ENCODE measurements at regions of chr3 and their contacts with region 1.

Region 1: GRCh38 chr3:47824541-47825473 is 21.9 kb downstream of the DHX30 start:
- DNase-seq: peak; percentile 80
- ATAC-seq: peak; percentile 98
- H3K4me3 Mint-ChIP-seq: peak overlapping the region; percentile 92
- H3K27ac Mint-ChIP-seq: peak overlapping the region; percentile 95
- H3K4me1 Mint-ChIP-seq: peaks cover 28% of the 10 kb centered on the region
- H3K27me3 Mint-ChIP-seq: no peaks in the 10 kb centered on the region
- CTCF ChIP-seq: peak; percentile 82

Region 2: DNA sequence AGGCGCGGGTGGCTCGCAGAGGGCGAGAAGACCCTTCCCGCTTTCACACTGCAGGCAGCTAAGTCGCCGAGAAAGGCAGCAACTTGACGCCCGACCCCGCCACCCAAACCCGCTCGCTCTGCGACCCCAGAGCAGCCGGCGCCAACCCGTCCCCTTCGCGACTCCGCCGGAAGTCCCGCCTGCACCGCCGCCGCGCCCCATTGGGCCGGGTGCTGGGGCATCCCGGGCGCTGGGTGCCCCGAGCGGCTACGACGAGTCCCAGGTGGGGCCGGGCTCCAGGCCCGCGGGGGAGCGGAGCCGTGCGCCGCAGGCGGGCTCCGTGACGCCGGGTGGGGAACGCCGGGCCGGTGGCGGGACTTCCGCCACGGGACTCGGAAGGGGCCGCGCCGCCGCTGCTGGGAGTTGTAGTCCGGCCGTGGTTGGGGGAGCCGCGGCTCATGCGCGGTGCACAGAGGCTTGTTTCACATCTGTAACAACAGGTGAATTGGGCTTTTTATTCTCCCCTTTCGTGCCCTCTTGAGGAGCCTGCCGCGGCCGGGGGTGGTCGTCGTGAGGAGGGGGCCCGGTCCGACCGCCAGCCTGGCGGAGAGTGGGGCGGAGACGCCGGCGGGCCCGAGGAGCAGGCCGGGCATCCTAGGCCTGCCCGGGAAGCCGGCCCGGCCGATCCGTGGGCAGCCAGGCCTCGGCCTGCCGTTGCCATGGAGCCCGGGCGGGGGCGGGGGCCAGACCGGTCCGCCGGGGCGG is 21.9 kb before region 1 on chr3 and contains the start of gene DHX30:
- CTCF ChIA-PET with region 1: interaction called, 25 read pairs
- POLR2A ChIA-PET with region 1: interaction called, 4 read pairs
- intact Hi-C with region 1: no loop called
- DNase-seq: peak; percentile 92
- ATAC-seq: peak; percentile 94
- H3K4me3 Mint-ChIP-seq: peak within 1 kb of the TSS; percentile 97
- H3K27ac Mint-ChIP-seq: peak within 1 kb of the TSS; percentile 98
- H3K4me1 Mint-ChIP-seq: peaks cover 20% of the 10 kb centered on the region
- H3K27me3 Mint-ChIP-seq: no peaks in the 10 kb centered on the region
- CTCF ChIP-seq: no peak
- total RNA-seq, gene DHX30: 81.5 to 84.2 TPM

Region 3: GRCh38 chr3:47813551-47814177 is 11.1 kb before region 1 on chr3:
- CTCF ChIA-PET with region 1: interaction called, 47 read pairs
- POLR2A ChIA-PET with region 1: interaction called, 23 read pairs
- intact Hi-C with region 1: no loop called
- DNase-seq: no peak
- ATAC-seq: no peak
- H3K4me3 Mint-ChIP-seq: no peak overlapping the region
- H3K27ac Mint-ChIP-seq: no peak overlapping the region
- H3K4me1 Mint-ChIP-seq: peaks cover 4% of the 10 kb centered on the region
- H3K27me3 Mint-ChIP-seq: no peaks in the 10 kb centered on the region
- CTCF ChIP-seq: no peak

Region 4: DNA sequence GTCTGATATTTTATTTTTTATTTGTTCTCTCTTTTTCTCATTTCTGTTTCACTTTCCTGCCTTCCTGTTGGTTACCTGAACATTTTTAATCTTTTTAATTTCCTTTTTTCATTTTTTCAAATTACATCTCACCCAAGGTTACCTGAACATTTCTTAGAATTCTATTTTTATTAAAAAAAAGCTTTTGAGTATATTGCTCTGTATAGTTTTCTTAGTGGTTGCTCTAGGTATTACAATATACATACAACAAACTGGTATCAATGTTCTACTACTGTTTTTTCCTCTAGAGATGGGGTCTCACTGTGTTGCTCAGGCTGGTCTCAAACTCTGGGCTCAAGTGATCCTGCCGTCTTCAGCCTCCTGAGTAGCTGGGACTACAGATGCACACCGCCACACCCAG is 57.5 kb after region 1 on chr3:
- CTCF ChIA-PET with region 1: no interaction called
- POLR2A ChIA-PET with region 1: no interaction called
- intact Hi-C with region 1: no loop called
- DNase-seq: no peak
- ATAC-seq: no peak
- H3K4me3 Mint-ChIP-seq: no peak overlapping the region
- H3K27ac Mint-ChIP-seq: no peak overlapping the region
- H3K4me1 Mint-ChIP-seq: peaks cover 11% of the 10 kb centered on the region
- H3K27me3 Mint-ChIP-seq: no peaks in the 10 kb centered on the region
- CTCF ChIP-seq: no peak

Region 5: GRCh38 chr3:48151058-48151806 is 326.4 kb after region 1 on chr3:
- CTCF ChIA-PET with region 1: interaction called, 12 read pairs
- POLR2A ChIA-PET with region 1: no interaction called
- intact Hi-C with region 1: no loop called
- DNase-seq: peak; percentile 77
- ATAC-seq: peak; percentile 98
- H3K4me3 Mint-ChIP-seq: no peak overlapping the region
- H3K27ac Mint-ChIP-seq: no peak overlapping the region
- H3K4me1 Mint-ChIP-seq: no peaks in the 10 kb centered on the region
- H3K27me3 Mint-ChIP-seq: no peaks in the 10 kb centered on the region
- CTCF ChIP-seq: peak; percentile 69